T-cell (primary cell): ENCODE measurements at regions of chr3 and their contacts with region 1.

Region 1: DNA sequence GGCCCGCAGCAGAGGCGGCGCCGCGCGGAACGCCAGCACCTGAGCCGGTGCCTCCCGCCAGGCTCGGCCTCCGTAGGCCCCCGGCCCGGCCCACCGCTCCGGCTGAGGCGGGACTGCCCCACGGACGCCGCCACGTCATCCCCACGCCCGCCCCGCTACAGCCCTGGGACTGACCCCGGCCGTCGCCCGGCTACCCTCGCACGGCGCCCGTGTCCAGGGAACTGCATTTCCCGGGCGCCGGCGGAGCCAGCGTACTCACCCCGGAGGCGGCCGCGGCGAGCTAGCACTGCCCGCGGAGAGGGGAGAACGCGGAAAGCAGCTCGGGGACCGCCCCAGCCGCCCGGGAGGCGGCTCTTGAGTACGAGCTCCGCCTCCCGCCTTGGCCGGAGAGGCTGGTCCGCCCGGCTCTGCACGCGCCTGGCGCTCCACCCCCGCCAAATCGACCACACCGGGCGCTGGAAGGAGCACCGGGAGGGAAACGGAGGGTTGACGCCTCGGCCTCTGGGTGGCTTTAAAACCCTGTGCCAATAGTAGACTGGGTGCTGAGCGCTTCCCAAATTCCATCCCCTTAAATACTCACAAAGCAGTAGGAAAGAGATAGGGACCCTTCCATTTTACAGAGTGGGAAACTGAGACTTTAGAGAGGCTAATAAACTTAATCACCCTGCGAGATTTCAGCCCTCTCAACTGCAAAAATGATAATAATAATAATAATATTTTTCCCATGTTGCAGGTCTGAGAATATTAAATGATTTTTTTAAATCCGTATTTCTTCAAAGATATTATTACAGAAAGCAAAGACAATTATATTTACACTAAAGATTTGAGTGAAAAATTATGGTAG is at the start of gene B4GALT4:
- DNase-seq: peak; percentile 7 to 74 (median 55)
- ATAC-seq: peak; percentile 75 to 80 (median 79)
- H3K4me3 ChIP-seq: peak within 1 kb of the TSS; percentile 67 to 84
- H3K4me3 Mint-ChIP-seq: peak within 1 kb of the TSS; percentile 82 to 89 (median 83)
- H3K27ac ChIP-seq: peak within 1 kb of the TSS; percentile 74
- H3K27ac Mint-ChIP-seq: peak within 1 kb of the TSS; percentile 82 to 94
- H3K4me1 ChIP-seq: peaks cover 27 to 30% of the 10 kb centered on the region in 2 experiments
- H3K4me1 Mint-ChIP-seq: peaks cover 42 to 45% (median 42%) of the 10 kb centered on the region in 3 donors
- H3K27me3 ChIP-seq: no peaks in the 10 kb centered on the region
- H3K27me3 Mint-ChIP-seq: no peaks in the 10 kb centered on the region
- total RNA-seq, gene B4GALT4: 14.0 to 33.7 (median 18.2) TPM

Region 2: GRCh38 chr3:119145500-119146191 is 95.2 kb before region 1 on chr3 and contains the start of gene TEX55:
- CTCF ChIA-PET with region 1: interaction called, 12 to 18 read pairs
- POLR2A ChIA-PET with region 1: no interaction called
- DNase-seq: peak in 2 of 35 experiments; percentile 2 to 46
- ATAC-seq: peak in 3 of 4 experiments; percentile 23 to 58 (median 53)
- H3K4me3 ChIP-seq: no peak within 1 kb of the TSS
- H3K4me3 Mint-ChIP-seq: no peak within 1 kb of the TSS
- H3K27ac ChIP-seq: no peak within 1 kb of the TSS
- H3K27ac Mint-ChIP-seq: peak within 1 kb of the TSS in 1 of 2 donors; percentile 1
- H3K4me1 ChIP-seq: no peaks in the 10 kb centered on the region
- H3K4me1 Mint-ChIP-seq: peaks cover 0 to 6% (median 4%) of the 10 kb centered on the region in 3 donors
- H3K27me3 ChIP-seq: no peaks in the 10 kb centered on the region
- H3K27me3 Mint-ChIP-seq: no peaks in the 10 kb centered on the region
- total RNA-seq, gene TEX55: not detected

Region 3: DNA sequence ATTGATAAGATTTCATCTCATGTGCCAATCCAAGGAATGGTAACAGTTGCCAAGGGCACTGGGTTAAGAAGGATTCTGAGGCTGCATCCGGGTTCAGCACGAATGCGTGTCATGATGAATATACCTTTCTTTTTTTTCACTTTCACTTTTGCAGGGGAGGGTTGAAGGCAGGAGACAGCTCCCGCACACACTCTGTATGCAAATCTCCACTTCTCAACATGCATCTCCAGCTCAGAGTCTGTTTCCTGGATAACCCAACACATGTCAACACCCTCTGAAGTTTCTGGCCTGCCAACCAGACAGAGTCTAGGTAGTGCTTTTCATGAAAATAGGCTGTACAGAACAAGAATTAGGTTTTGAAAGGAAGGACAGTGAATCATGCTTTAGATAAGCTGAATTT is 21.7 kb before region 1 on chr3:
- CTCF ChIA-PET with region 1: interaction called, 7 to 14 read pairs
- POLR2A ChIA-PET with region 1: interaction called, 4 read pairs
- DNase-seq: peak in 27 of 35 experiments; percentile 6 to 64 (median 32)
- ATAC-seq: peak; percentile 94 to 100 (median 94)
- H3K4me3 ChIP-seq: no peak overlapping the region
- H3K4me3 Mint-ChIP-seq: peak overlapping the region; percentile 41 to 60 (median 54)
- H3K27ac ChIP-seq: peak overlapping the region; percentile 52
- H3K27ac Mint-ChIP-seq: peak overlapping the region; percentile 89 to 93
- H3K4me1 ChIP-seq: peaks cover 11 to 18% of the 10 kb centered on the region in 2 experiments
- H3K4me1 Mint-ChIP-seq: peaks cover 38 to 47% (median 42%) of the 10 kb centered on the region in 3 donors
- H3K27me3 ChIP-seq: no peaks in the 10 kb centered on the region
- H3K27me3 Mint-ChIP-seq: no peaks in the 10 kb centered on the region

Region 4: GRCh38 chr3:119293871-119294695 is 53.3 kb after region 1 on chr3 and contains the start of gene ARHGAP31:
- CTCF ChIA-PET with region 1: interaction called, 5 to 14 read pairs
- POLR2A ChIA-PET with region 1: interaction called in 1 of 2 experiments, 6 read pairs
- DNase-seq: peak; percentile 60 to 94 (median 85)
- ATAC-seq: peak; percentile 67 to 76 (median 72)
- H3K4me3 ChIP-seq: peak within 1 kb of the TSS; percentile 74 to 81
- H3K4me3 Mint-ChIP-seq: peak within 1 kb of the TSS; percentile 85 to 93 (median 90)
- H3K27ac ChIP-seq: peak within 1 kb of the TSS; percentile 97
- H3K27ac Mint-ChIP-seq: peak within 1 kb of the TSS; percentile 79 to 94
- H3K4me1 ChIP-seq: peaks cover 15 to 53% of the 10 kb centered on the region in 2 experiments
- H3K4me1 Mint-ChIP-seq: peaks cover 53 to 67% (median 65%) of the 10 kb centered on the region in 3 donors
- H3K27me3 ChIP-seq: peaks cover 0 to 8% of the 10 kb centered on the region in 2 experiments
- H3K27me3 Mint-ChIP-seq: no peaks in the 10 kb centered on the region
- total RNA-seq, gene ARHGAP31: 2.7 to 5.1 (median 3.4) TPM

Region 5: DNA sequence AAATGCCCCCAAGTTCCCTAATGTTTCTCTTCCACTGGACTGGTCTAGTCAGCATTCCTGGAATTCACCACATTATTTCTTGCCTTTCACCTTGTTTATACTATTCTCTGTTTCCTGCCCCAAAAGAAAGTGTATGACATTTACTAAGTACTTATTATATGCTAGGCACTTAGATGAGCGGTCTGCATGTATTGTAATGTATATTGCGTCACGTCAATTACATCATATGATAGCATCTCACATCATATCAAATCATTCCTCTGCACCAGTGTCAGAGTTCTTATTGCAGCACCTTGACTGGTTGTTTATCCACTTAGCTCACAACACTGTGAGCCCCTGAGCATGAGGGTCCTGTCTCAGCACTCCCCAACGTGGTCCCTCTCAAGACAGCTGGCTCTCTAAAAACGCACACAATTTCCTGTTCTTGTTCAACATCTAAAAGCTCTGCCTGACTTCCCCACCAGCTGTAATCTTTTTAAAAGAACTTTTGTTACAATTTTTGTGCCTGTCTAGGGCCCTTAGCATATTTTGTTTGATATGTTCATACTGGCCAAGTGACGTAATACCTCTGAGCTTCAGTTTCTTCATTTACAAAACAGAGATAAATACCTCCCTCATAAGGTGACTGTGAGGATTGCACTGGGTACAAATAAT is 112.2 kb after region 1 on chr3:
- CTCF ChIA-PET with region 1: interaction called, 3 to 29 read pairs
- POLR2A ChIA-PET with region 1: no interaction called
- DNase-seq: peak in 9 of 35 experiments; percentile 3 to 72 (median 14)
- ATAC-seq: peak; percentile 46 to 88 (median 62)
- H3K4me3 ChIP-seq: no peak overlapping the region
- H3K4me3 Mint-ChIP-seq: peak overlapping the region in 1 of 3 donors; percentile 43
- H3K27ac ChIP-seq: no peak overlapping the region
- H3K27ac Mint-ChIP-seq: peak overlapping the region; percentile 42 to 48
- H3K4me1 ChIP-seq: peaks cover 24 to 38% of the 10 kb centered on the region in 2 experiments
- H3K4me1 Mint-ChIP-seq: peaks cover 31 to 44% (median 37%) of the 10 kb centered on the region in 3 donors
- H3K27me3 ChIP-seq: no peaks in the 10 kb centered on the region
- H3K27me3 Mint-ChIP-seq: no peaks in the 10 kb centered on the region

Region 6: GRCh38 chr3:119395923-119396358 is 155.1 kb after region 1 on chr3:
- CTCF ChIA-PET with region 1: no interaction called
- POLR2A ChIA-PET with region 1: no interaction called
- DNase-seq: no peak
- ATAC-seq: no peak
- H3K4me3 ChIP-seq: no peak overlapping the region
- H3K4me3 Mint-ChIP-seq: no peak overlapping the region
- H3K27ac ChIP-seq: no peak overlapping the region
- H3K27ac Mint-ChIP-seq: no peak overlapping the region
- H3K4me1 ChIP-seq: no peaks in the 10 kb centered on the region
- H3K4me1 Mint-ChIP-seq: peaks cover 7 to 18% (median 8%) of the 10 kb centered on the region in 3 donors
- H3K27me3 ChIP-seq: no peaks in the 10 kb centered on the region
- H3K27me3 Mint-ChIP-seq: no peaks in the 10 kb centered on the region